MCF 10A (cell line): ENCODE measurements at regions of chr15 and their contacts with region 1.

Region 1: DNA sequence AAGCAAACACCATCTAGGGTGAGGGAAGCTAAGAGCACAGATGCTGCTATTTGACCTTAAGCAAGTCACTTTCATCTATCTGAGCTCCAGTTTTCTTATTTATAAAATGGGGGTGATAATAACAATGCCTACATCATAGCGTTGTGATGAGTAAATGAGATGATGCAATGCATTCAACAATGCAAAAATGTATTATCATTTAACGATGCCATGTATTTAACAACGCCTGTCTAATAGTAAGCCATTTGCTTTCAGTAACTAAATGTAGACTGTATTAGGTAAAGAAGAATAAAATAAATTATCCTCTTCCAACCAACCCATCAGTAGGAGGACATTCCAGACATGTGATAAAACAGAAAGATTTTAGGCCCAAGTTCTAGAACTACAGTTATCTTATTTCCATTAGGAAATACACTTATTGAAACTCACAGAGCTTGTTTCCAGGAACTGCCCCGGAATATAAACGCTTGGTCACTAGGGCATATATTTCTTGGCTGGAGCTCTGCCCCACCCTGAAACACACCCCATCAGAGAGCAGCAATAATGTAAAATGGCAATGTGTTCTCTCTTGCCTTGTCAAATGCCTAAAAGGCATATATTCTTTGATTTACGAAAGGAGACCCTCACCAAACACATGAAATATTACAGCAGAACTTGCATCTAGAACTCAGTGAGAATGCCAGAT is 128.3 kb downstream of the LIPC start:
- DNase-seq: no peak
- H3K4me3 Mint-ChIP-seq: no peak overlapping the region
- H3K27ac Mint-ChIP-seq: no peak overlapping the region
- H3K4me1 Mint-ChIP-seq: no peaks in the 10 kb centered on the region
- H3K27me3 Mint-ChIP-seq: peaks cover 11% of the 10 kb centered on the region
- CTCF ChIP-seq: no peak

Region 2: DNA sequence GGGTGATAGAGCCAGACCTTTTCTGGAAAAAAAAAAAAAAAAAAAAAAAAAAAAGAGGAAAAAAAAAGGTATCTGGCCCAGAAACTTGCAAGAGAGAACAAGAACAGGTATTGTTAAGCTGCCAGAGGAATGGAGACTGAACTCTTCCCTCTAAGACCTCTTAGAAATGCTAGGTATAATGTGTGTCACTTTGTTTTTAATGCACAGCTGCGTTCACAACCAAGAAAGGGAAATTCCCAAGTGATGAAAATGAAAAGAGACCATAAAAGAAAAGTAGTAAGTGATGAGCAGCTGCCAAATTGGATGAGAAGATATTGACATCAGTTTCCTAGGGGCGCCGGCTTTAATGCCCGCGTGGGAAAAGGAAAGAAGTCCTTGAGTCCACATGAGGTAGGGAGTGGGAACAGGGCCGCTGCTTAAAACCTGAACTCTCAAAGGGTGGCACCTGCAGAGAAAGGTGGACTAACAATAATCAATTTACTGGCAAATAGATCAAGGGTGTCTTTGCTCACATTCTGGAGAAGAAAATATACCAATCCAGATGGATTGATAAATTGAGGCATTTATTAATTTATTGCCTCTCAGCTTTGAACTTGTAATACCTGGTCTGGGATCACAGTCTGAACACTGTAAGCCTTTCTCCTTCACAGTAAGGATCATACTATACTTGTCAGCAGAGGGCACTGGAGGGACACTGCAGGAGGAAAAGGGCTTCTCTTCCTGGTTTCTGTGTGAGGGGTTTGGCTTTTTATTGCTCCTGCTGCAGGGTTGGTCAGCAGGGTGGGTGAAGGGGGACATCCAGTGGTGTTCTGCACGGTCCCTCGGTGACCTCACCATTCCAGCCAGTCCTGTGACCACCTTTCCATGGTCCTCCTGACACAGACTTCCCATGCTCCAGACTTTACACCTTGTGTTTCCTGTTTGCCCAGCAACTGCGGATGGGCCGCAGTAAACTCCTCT is 290.3 kb before region 1 on chr15:
- CTCF ChIA-PET with region 1: interaction called, 10 read pairs
- POLR2A ChIA-PET with region 1: no interaction called
- intact Hi-C with region 1: no loop called
- DNase-seq: peak; percentile 61
- H3K4me3 Mint-ChIP-seq: no peak overlapping the region
- H3K27ac Mint-ChIP-seq: peak overlapping the region; percentile 23
- H3K4me1 Mint-ChIP-seq: peaks cover 11% of the 10 kb centered on the region
- H3K27me3 Mint-ChIP-seq: no peaks in the 10 kb centered on the region
- CTCF ChIP-seq: peak; percentile 56